ENCODE measurements at regions of chr4 and their contacts with region 1.

Region 1: GRCh38 chr4:7843831-7844593 is 95.6 kb downstream of the AFAP1 start:
- DNase-seq: peak; percentile 65
- CTCF ChIP-seq: peak; percentile 56

Region 2: GRCh38 chr4:7827991-7828720 is 15.9 kb before region 1 on chr4:
- CTCF ChIA-PET with region 1: interaction called, 12 read pairs
- POLR2A ChIA-PET with region 1: no interaction called
- DNase-seq: peak; percentile 49
- CTCF ChIP-seq: no peak

Region 3: GRCh38 chr4:7987148-7987989 is 143.4 kb after region 1 on chr4:
- CTCF ChIA-PET with region 1: interaction called, 19 read pairs
- POLR2A ChIA-PET with region 1: no interaction called
- DNase-seq: peak; percentile 77
- CTCF ChIP-seq: peak; percentile 82